Ovary (tissue), 10 donors: ENCODE measurements at regions of chr22 and their contacts with region 1.

Region 1: GRCh38 chr22:37316875-37317371 is 34.6 kb downstream of the CYTH4 start:
- DNase-seq: peak; percentile 53 to 77 (median 67)
- H3K4me3 ChIP-seq: no peak overlapping the region
- H3K27ac ChIP-seq: no peak overlapping the region
- H3K4me1 ChIP-seq: no peaks in the 10 kb centered on the region
- H3K27me3 ChIP-seq: no peaks in the 10 kb centered on the region
- CTCF ChIP-seq: peak in 2 of 3 donors; percentile 51 to 80
- EP300 ChIP-seq: no peak
- POLR2A ChIP-seq: no peak

Region 2: GRCh38 chr22:36156515-36157419 is 1160.2 kb before region 1 on chr22:
- intact Hi-C with region 1: loop called in 1 of 4 experiments (anchors 10 kb)
- DNase-seq: peak; percentile 85 to 93 (median 89)
- H3K4me3 ChIP-seq: peak overlapping the region; percentile 35
- H3K27ac ChIP-seq: peak overlapping the region; percentile 84 to 85
- H3K4me1 ChIP-seq: peaks cover 23% of the 10 kb centered on the region
- H3K27me3 ChIP-seq: no peaks in the 10 kb centered on the region
- CTCF ChIP-seq: no peak
- EP300 ChIP-seq: peak; percentile 77
- POLR2A ChIP-seq: peak; percentile 29

Region 3: DNA sequence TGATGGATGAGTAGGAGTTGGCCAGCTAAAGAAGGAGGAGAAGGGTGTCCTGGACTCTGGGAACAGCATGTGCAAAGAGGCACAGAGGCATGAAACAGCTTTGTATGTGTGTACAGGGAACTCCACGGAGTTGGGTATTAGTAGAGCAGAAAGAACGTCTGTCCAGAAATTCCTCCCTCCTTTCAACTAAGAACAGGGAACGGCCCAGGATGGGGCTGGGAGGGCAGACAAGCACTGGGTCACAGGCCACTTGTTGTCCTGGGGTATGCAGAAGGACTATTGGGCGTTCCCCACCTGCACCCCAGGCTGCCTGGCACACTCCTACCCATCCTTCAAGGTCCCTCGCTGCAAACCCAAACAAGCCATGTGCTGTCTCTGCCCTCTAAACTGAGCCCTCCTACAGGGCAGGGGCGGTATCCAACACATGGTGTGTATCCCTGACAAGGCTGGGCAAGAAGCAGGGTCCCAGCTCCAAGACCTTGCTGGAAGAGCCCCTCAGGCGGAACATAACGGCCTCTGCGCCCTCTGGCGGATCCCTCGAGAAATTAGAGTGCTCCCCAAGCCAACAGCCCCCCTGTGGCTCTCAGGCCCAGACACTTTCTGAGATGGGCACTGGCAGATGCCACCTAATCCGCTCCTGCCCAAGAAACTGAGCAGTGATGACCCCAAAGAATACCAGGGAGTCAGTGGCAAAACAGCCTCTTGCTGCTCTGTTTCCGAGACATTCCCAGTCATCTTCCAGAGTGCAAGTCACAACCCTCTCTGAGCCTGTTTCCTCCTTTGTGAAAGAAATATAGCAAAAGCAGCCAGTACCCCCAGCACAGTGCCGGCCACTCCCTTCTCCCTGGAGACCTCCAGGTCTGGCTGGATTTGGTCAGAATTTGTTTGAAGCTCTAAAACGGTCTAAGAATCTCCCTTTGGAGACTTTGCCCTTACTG is 112.0 kb after region 1 on chr22:
- intact Hi-C with region 1: loop called in 1 of 4 experiments (anchors 10 kb)
- DNase-seq: peak in 2 of 5 donors; percentile 36 to 48
- H3K4me3 ChIP-seq: no peak overlapping the region
- H3K27ac ChIP-seq: no peak overlapping the region
- H3K4me1 ChIP-seq: peaks cover 4% of the 10 kb centered on the region
- H3K27me3 ChIP-seq: no peaks in the 10 kb centered on the region
- CTCF ChIP-seq: no peak
- EP300 ChIP-seq: no peak
- POLR2A ChIP-seq: no peak

Region 4: GRCh38 chr22:37486224-37486845 is 169.4 kb after region 1 on chr22 and contains the start of gene MFNG:
- intact Hi-C with region 1: loop called in 1 of 4 experiments (anchors 10 kb)
- DNase-seq: peak in 4 of 5 donors; percentile 34 to 68 (median 48)
- H3K4me3 ChIP-seq: peak within 1 kb of the TSS; percentile 10
- H3K27ac ChIP-seq: no peak within 1 kb of the TSS
- H3K4me1 ChIP-seq: no peaks in the 10 kb centered on the region
- H3K27me3 ChIP-seq: no peaks in the 10 kb centered on the region
- CTCF ChIP-seq: no peak
- EP300 ChIP-seq: no peak
- POLR2A ChIP-seq: no peak
- total RNA-seq, gene MFNG: 4.4 to 11.1 (median 7.1) TPM

Region 5: GRCh38 chr22:37581504-37581903 is 264.6 kb after region 1 on chr22:
- intact Hi-C with region 1: loop called in 1 of 4 experiments (anchors 10 kb)
- DNase-seq: no peak
- H3K4me3 ChIP-seq: no peak overlapping the region
- H3K27ac ChIP-seq: no peak overlapping the region
- H3K4me1 ChIP-seq: no peaks in the 10 kb centered on the region
- H3K27me3 ChIP-seq: no peaks in the 10 kb centered on the region
- CTCF ChIP-seq: no peak
- EP300 ChIP-seq: no peak
- POLR2A ChIP-seq: no peak